B cell (primary cell): ENCODE measurements at regions of chr12 and their contacts with region 1.

Region 1: DNA sequence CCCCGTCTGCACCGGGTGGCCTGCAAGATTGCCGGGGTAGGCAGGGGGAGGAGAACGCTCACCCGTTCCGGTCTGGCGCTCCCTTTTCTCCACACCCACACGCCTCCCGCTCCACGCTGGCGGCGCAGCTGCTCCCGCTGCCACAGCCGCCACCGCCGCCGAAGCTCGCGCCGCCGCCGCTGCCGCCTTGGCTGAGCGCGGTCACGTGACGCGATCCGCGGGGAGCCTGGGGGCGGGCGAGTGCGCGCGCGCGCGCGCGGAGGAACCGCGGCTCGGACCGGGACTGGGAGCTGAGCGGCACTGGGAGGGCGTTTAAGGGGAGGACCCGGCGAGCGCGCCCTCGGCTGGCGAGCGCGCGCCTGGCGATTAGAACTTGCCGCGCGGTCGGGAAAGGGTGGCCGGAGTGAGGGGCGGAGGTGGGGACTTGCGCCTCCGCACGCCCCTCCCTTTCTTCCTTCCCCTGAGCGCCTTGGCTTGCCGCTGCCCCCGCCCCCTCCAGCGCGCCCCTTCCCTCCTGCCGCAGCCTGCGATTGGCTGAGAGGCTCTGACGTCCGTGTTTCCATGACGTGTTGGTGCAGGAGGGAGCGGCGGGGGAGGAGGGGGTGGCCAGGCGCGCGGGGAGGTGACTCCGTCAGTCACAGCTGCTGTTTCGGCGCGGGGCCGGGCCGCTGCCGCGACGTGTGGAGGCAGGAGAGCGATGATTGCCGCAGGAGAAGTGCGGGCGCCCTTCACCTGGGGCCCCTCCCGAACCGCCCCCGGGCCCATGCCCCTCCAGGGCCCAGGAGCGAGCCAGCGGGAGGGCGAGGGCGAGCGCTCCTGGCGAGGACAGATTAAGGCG is 738 bp upstream of the ATP2B1 start:
- DNase-seq: peak; percentile 100
- ATAC-seq: peak; percentile 72
- H3K4me3 ChIP-seq: peak overlapping the region; percentile 84 to 99 (median 97)
- H3K4me3 Mint-ChIP-seq: peak overlapping the region; percentile 93
- H3K27ac ChIP-seq: peak overlapping the region; percentile 95 to 99
- H3K27ac Mint-ChIP-seq: peak overlapping the region; percentile 98
- H3K4me1 ChIP-seq: peaks cover 15 to 31% of the 10 kb centered on the region in 2 donors
- H3K4me1 Mint-ChIP-seq: peaks cover 33% of the 10 kb centered on the region
- H3K27me3 ChIP-seq: no peaks in the 10 kb centered on the region
- H3K27me3 Mint-ChIP-seq: no peaks in the 10 kb centered on the region
- CTCF ChIP-seq: no peak

Region 2: GRCh38 chr12:89695830-89696229 is 13.5 kb before region 1 on chr12:
- CTCF ChIA-PET with region 1: interaction called, 3 read pairs
- POLR2A ChIA-PET with region 1: no interaction called
- intact Hi-C with region 1: loop called (anchors 1 kb)
- DNase-seq: no peak
- ATAC-seq: no peak
- H3K4me3 ChIP-seq: no peak overlapping the region
- H3K4me3 Mint-ChIP-seq: peak overlapping the region; percentile 11
- H3K27ac ChIP-seq: peak overlapping the region in 1 of 2 donors; percentile 27
- H3K27ac Mint-ChIP-seq: no peak overlapping the region
- H3K4me1 ChIP-seq: peaks cover 37 to 73% of the 10 kb centered on the region in 2 donors
- H3K4me1 Mint-ChIP-seq: peaks cover 85% of the 10 kb centered on the region
- H3K27me3 ChIP-seq: no peaks in the 10 kb centered on the region
- H3K27me3 Mint-ChIP-seq: no peaks in the 10 kb centered on the region
- CTCF ChIP-seq: no peak

Region 3: GRCh38 chr12:89756585-89757321 is 47.4 kb after region 1 on chr12:
- CTCF ChIA-PET with region 1: no interaction called
- POLR2A ChIA-PET with region 1: interaction called, 4 read pairs
- intact Hi-C with region 1: loop called (anchors 1 kb)
- DNase-seq: peak; percentile 69
- ATAC-seq: peak; percentile 78
- H3K4me3 ChIP-seq: no peak overlapping the region
- H3K4me3 Mint-ChIP-seq: peak overlapping the region; percentile 33
- H3K27ac ChIP-seq: peak overlapping the region; percentile 14 to 67
- H3K27ac Mint-ChIP-seq: peak overlapping the region; percentile 92
- H3K4me1 ChIP-seq: peaks cover 44 to 47% of the 10 kb centered on the region in 2 donors
- H3K4me1 Mint-ChIP-seq: peaks cover 55% of the 10 kb centered on the region
- H3K27me3 ChIP-seq: no peaks in the 10 kb centered on the region
- H3K27me3 Mint-ChIP-seq: no peaks in the 10 kb centered on the region
- CTCF ChIP-seq: no peak

Region 4: DNA sequence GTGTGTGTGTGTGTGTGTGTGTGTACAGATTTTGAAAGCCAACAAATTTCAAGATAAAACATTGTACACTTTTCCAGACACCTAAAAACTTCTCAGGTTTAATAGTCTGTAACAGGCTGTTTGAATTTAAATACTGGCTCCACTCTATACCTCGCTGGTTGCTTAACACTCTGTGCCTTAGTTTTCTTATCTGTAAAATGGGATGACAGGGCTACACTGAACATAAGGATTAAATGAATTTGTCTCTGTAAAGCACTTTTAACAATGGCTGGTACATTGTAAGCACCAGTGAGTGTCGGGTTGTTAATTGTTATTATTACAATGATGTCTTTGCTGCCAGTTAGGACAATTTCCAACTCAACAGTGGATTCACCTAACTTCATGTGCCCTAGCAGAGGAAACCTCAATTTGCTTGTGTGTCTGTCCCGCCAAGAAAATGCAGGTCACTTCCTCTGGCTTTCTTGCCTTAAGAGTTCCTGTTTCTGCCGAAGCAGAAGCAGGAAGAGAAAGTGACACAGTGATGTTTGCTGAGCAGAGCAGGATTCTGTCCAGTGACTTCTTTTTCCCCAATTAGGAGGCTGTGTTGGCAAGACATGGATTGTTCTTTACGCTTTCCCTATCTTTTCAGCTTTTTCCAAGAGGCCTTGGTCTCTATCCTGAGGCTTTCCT is 153.3 kb after region 1 on chr12:
- CTCF ChIA-PET with region 1: interaction called, 7 read pairs
- POLR2A ChIA-PET with region 1: interaction called, 16 read pairs
- intact Hi-C with region 1: loop called (anchors 1 kb)
- DNase-seq: peak; percentile 88
- ATAC-seq: peak; percentile 68
- H3K4me3 ChIP-seq: peak overlapping the region; percentile 23 to 65 (median 44)
- H3K4me3 Mint-ChIP-seq: peak overlapping the region; percentile 86
- H3K27ac ChIP-seq: peak overlapping the region; percentile 92 to 96
- H3K27ac Mint-ChIP-seq: peak overlapping the region; percentile 98
- H3K4me1 ChIP-seq: peaks cover 58 to 65% of the 10 kb centered on the region in 2 donors
- H3K4me1 Mint-ChIP-seq: peaks cover 68% of the 10 kb centered on the region
- H3K27me3 ChIP-seq: no peaks in the 10 kb centered on the region
- H3K27me3 Mint-ChIP-seq: no peaks in the 10 kb centered on the region
- CTCF ChIP-seq: no peak

Region 5: DNA sequence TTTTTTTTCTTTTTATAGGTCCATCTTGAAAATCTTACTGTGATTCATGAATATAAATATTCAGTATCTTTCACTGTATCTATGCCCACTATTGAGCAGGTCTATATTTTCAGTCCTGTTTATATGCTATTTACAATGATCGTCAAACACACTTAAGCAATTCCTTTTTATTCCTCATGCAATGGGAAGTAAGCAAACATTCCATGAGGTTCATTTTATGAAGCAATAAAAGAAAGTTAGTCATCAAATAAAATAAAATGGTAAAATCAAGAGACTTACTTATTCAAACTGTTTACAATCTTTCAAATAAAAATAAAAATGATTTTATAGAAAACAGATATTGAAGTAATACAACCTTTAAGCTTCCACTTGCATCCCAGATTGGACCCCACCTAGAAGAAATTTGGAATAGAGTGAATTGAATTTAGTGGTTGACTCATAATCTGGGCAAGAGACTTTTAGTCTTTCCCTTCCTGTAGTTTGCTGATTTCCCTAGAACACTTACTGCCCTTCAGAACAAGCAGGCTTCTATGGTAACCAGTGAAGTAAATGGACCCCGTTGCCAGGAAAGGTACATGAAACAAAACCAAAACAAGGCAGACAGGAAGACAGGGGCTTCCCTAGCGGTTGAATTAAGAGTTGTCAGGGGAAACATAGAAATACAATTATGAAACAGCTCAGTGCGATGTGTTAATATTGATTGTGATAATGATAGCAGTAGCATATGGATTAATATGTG is 240.2 kb after region 1 on chr12:
- CTCF ChIA-PET with region 1: interaction called, 25 read pairs
- POLR2A ChIA-PET with region 1: interaction called, 19 read pairs
- intact Hi-C with region 1: loop called (anchors 1 kb)
- DNase-seq: peak; percentile 90
- ATAC-seq: peak; percentile 65
- H3K4me3 ChIP-seq: peak overlapping the region in 3 of 5 experiments; percentile 9 to 47 (median 12)
- H3K4me3 Mint-ChIP-seq: peak overlapping the region; percentile 68
- H3K27ac ChIP-seq: peak overlapping the region; percentile 81 to 98
- H3K27ac Mint-ChIP-seq: peak overlapping the region; percentile 81
- H3K4me1 ChIP-seq: peaks cover 44 to 47% of the 10 kb centered on the region in 2 donors
- H3K4me1 Mint-ChIP-seq: peaks cover 60% of the 10 kb centered on the region
- H3K27me3 ChIP-seq: no peaks in the 10 kb centered on the region
- H3K27me3 Mint-ChIP-seq: no peaks in the 10 kb centered on the region
- CTCF ChIP-seq: peak; percentile 70

Region 6: DNA sequence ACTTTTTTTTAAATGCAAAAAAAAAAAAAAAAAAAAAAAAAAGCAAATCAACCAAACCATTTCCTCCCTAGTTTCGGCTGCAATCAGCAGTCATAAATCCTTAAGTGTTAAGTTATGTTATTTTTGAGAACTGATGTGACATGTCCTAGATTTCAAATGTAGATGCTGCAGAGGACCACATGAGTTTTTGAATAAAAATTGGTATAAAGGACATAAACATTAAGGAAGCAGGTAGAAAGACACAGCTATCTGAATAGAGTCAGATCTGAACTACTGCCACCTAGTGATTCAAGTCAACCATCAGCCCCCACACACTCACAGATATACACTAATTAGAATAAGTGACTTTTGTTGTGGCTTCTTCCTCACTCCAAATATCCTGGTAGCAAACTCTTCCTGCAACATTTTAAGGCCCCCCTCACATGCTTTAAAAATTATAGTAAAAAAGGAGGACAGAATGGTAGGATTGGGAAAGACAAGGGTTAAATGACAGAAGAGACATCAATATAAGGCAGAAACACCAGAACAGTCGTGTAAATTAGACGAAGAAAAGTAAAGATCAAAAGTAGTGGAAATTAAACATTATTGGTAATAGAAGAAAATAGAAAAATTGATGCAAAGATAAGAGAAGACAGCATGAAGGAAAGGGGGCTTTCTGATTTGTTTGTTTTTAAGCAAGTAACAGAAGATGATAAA is 393.7 kb after region 1 on chr12:
- CTCF ChIA-PET with region 1: interaction called, 9 read pairs
- POLR2A ChIA-PET with region 1: interaction called, 3 read pairs
- intact Hi-C with region 1: loop called (anchors 2 kb)
- DNase-seq: peak; percentile 66
- ATAC-seq: peak; percentile 70
- H3K4me3 ChIP-seq: peak overlapping the region in 1 of 5 experiments; percentile 46
- H3K4me3 Mint-ChIP-seq: peak overlapping the region; percentile 77
- H3K27ac ChIP-seq: no peak overlapping the region
- H3K27ac Mint-ChIP-seq: no peak overlapping the region
- H3K4me1 ChIP-seq: peaks cover 4 to 5% of the 10 kb centered on the region in 2 donors
- H3K4me1 Mint-ChIP-seq: peaks cover 29% of the 10 kb centered on the region
- H3K27me3 ChIP-seq: no peaks in the 10 kb centered on the region
- H3K27me3 Mint-ChIP-seq: no peaks in the 10 kb centered on the region
- CTCF ChIP-seq: peak; percentile 75